Heart right ventricle (tissue), 16 donors: ENCODE measurements at regions of chr2 and their contacts with region 1.

Region 1: DNA sequence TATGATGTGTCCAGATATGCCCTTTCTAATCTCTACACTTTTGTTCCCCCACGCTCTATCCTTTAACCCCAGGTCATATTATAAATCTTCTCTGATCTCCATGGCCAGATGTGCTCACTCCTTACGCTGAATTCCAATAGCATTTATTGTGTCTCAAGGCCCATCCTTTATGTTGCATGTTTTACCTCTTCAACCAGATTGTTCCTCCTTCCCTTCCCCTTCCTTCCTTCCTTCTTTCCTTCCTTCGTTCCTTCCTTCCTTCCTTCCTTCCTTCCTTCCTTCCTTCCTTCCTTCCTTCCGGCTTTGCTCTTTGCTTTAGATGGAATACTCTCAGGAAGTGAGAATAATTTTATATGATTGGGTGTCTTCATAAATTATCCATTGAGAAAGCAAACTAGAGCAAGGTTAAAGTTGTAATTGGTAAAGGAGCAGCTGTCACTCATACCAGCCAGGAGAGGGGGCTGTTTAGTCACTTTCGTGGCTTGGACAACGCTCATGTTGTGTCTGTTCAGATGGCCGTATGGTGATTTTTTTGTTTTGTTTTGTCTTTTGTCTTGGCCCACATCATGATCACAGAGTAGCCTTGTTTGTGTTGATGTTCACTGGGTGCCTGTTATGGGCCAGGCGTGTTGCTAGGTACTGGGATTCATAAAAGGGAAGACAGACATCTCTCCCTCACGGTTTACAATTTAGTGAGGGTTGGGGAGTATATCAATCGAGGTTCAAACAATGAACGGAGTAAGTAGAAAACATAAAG is 68.0 kb downstream of the DAW1 start:
- DNase-seq: no peak
- ATAC-seq: peak in 5 of 8 donors; percentile 38 to 59 (median 56)
- H3K4me3 ChIP-seq: no peak overlapping the region
- H3K27ac ChIP-seq: no peak overlapping the region
- H3K4me1 ChIP-seq: no peaks in the 10 kb centered on the region
- H3K27me3 ChIP-seq: peaks cover 0 to 7% (median 0%) of the 10 kb centered on the region in 7 donors
- CTCF ChIP-seq: peak; percentile 13 to 57 (median 43)

Region 2: GRCh38 chr2:227996366-227996765 is 56.9 kb after region 1 on chr2:
- intact Hi-C with region 1: no loop called
- DNase-seq: no peak
- ATAC-seq: no peak
- H3K4me3 ChIP-seq: no peak overlapping the region
- H3K27ac ChIP-seq: no peak overlapping the region
- H3K4me1 ChIP-seq: peaks cover 0 to 13% (median 0%) of the 10 kb centered on the region in 9 donors
- H3K27me3 ChIP-seq: no peaks in the 10 kb centered on the region
- CTCF ChIP-seq: no peak

Region 3: DNA sequence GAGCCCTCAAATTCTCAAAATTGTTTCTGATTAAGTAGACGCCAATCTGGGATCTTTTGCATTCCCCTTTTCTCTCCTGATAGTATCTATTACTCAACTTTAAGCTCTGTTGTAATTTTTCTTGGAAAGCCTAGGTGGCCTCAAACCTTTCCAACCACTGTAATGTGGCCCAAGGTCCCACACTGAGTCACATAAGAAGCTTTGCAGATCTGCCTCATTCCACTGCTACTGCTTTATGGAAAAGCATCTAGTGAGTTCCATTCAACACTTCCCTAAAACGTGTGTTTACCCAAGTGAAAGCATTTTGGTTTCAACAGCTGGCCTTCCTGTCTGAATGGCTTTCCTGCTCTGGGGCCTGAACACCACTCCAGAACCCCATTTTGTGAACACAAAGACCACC is 735.6 kb after region 1 on chr2:
- intact Hi-C with region 1: loop called in 1 of 10 experiments (anchors 10 kb)
- DNase-seq: no peak
- ATAC-seq: peak in 6 of 8 donors; percentile 59 to 87 (median 80)
- H3K4me3 ChIP-seq: no peak overlapping the region
- H3K27ac ChIP-seq: no peak overlapping the region
- H3K4me1 ChIP-seq: peaks cover 0 to 10% (median 0%) of the 10 kb centered on the region in 9 donors
- H3K27me3 ChIP-seq: no peaks in the 10 kb centered on the region
- CTCF ChIP-seq: no peak